SK-N-SH (cell line): ENCODE measurements at regions of chr16 and their contacts with region 1.

Region 1: GRCh38 chr16:89860747-89861304 is 12.6 kb upstream of the TCF25 start:
- DNase-seq: peak; percentile 95
- H3K4me3 ChIP-seq: peak overlapping the region in 1 of 2 experiments; percentile 25; a peak in 1 of 4 replicates
- H3K27ac ChIP-seq: no peak overlapping the region
- H3K4me1 ChIP-seq: no peaks in the 10 kb centered on the region
- H3K27me3 ChIP-seq: no peaks in the 10 kb centered on the region
- CTCF ChIP-seq: peak; percentile 95
- EP300 ChIP-seq: no peak
- RAD21 ChIP-seq: peak; percentile 88

Region 2: GRCh38 chr16:89700100-89700648 is 160.7 kb before region 1 on chr16:
- CTCF ChIA-PET with region 1: interaction called, 37 read pairs
- POLR2A ChIA-PET with region 1: no interaction called
- DNase-seq: peak; percentile 97
- H3K4me3 ChIP-seq: peak overlapping the region; percentile 78 to 79
- H3K27ac ChIP-seq: peak overlapping the region; percentile 71
- H3K4me1 ChIP-seq: peaks cover 9 to 29% of the 10 kb centered on the region in 2 experiments; a peak in 2 of 4 replicates
- H3K27me3 ChIP-seq: no peaks in the 10 kb centered on the region
- CTCF ChIP-seq: peak; percentile 69
- EP300 ChIP-seq: no peak
- RAD21 ChIP-seq: peak; percentile 73

Region 3: DNA sequence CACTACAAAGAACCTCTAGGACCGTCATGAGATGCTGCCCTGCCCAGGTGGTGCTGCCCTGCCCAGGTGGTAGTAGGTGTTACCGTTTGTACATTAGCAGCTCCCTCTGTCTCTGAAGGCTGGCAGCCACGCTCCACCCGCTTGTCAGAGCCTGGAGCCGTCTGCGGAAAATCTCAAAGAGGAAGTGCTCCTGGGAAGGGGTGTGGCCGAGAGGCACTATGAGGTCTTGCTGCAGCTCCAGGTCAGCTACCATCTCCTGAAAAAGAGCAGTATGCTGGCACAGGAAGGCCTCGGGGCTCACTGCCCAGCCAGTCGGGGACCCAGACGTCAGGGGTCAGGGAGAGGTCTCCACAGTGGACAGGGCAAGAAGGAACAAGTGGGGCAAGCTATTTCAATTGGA is 111.2 kb before region 1 on chr16:
- CTCF ChIA-PET with region 1: interaction called, 162 read pairs
- POLR2A ChIA-PET with region 1: no interaction called
- DNase-seq: no peak
- H3K4me3 ChIP-seq: no peak overlapping the region
- H3K27ac ChIP-seq: no peak overlapping the region
- H3K4me1 ChIP-seq: no peaks in the 10 kb centered on the region; a peak in 1 of 4 replicates
- H3K27me3 ChIP-seq: no peaks in the 10 kb centered on the region
- CTCF ChIP-seq: no peak
- EP300 ChIP-seq: no peak
- RAD21 ChIP-seq: no peak

Region 4: DNA sequence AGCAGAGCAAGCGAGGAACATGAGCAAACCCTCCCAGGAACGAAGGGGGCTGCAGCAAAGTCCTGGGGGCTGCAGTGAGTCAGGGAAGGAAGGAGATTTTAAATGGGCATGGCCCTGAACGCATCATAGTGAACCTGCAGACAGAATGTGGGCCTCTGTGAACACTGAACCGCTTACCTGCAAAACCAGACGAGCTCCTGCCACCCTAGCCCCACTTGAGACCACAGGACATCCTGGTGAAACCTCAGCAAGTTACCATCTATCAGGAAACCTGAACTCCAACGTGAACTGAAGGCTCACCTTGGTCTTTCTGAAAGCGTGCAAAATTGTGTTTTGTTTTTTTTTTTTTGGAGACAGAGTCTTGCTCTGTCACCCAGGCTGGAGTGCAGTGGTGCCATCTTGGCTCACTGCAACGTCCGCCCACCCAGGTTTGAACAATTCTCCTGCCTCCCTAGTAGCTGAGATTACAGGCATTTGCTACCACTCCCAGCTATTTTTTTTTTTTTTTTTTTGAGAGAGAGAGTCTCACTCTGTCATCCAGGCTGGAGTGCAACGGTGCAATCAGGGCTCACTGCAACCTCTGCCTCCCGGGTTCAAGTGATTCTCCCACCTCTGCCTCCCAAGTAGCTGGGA is 75.2 kb before region 1 on chr16:
- CTCF ChIA-PET with region 1: interaction called, 31 read pairs
- POLR2A ChIA-PET with region 1: no interaction called
- DNase-seq: no peak
- H3K4me3 ChIP-seq: no peak overlapping the region
- H3K27ac ChIP-seq: no peak overlapping the region; a peak in 1 of 4 replicates
- H3K4me1 ChIP-seq: peaks cover 0 to 9% of the 10 kb centered on the region in 2 experiments; a peak in 1 of 4 replicates
- H3K27me3 ChIP-seq: no peaks in the 10 kb centered on the region
- CTCF ChIP-seq: no peak
- EP300 ChIP-seq: no peak
- RAD21 ChIP-seq: no peak

Region 5: DNA sequence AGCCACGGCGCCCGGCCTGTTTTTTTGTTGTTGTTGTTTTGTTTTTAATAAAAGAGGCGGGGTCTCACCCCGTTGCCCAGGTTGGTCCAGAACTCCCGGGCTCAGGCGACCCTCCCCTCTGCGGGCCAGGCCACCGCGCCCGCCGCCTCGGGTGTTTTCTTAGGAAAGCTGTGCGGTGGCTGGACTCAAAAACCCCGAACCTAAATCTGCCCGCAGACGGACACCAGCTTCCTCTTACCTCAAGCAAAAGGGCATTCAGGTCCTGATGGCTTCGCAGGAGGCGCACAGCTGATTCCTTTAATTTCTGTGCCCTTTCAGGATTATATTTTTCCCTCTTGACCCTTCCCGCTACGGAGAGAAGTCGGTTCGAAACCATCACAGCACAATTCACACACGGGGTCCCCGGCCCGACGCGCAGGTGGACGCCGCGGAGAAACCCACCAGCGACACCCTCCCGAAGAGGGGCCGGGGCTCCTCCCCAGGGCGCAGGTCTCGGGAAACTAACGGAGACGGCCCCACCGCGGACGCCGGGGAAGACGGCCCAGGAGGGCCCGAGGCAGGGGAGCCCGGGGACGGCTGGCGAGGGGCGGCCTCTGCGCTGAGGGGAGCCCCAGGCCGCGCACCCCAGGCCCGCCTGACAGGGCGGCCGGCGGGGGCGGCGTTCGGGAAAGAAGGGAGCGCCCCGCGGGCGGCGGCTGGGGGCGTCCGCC is 45.0 kb before region 1 on chr16:
- CTCF ChIA-PET with region 1: interaction called, 36 read pairs
- POLR2A ChIA-PET with region 1: no interaction called
- DNase-seq: peak; percentile 74
- H3K4me3 ChIP-seq: peak overlapping the region; percentile 62 to 88
- H3K27ac ChIP-seq: no peak overlapping the region
- H3K4me1 ChIP-seq: peaks cover 0 to 2% of the 10 kb centered on the region in 2 experiments; a peak in 2 of 4 replicates
- H3K27me3 ChIP-seq: no peaks in the 10 kb centered on the region
- CTCF ChIP-seq: no peak
- EP300 ChIP-seq: no peak
- RAD21 ChIP-seq: no peak

Region 6: GRCh38 chr16:89837305-89837554 is 23.6 kb before region 1 on chr16:
- CTCF ChIA-PET with region 1: interaction called, 68 read pairs
- POLR2A ChIA-PET with region 1: no interaction called
- DNase-seq: no peak
- H3K4me3 ChIP-seq: no peak overlapping the region
- H3K27ac ChIP-seq: no peak overlapping the region
- H3K4me1 ChIP-seq: peaks cover under 1 to 7% of the 10 kb centered on the region in 2 experiments; a peak in 1 of 4 replicates
- H3K27me3 ChIP-seq: no peaks in the 10 kb centered on the region
- CTCF ChIP-seq: no peak
- EP300 ChIP-seq: no peak
- RAD21 ChIP-seq: no peak

Region 7: DNA sequence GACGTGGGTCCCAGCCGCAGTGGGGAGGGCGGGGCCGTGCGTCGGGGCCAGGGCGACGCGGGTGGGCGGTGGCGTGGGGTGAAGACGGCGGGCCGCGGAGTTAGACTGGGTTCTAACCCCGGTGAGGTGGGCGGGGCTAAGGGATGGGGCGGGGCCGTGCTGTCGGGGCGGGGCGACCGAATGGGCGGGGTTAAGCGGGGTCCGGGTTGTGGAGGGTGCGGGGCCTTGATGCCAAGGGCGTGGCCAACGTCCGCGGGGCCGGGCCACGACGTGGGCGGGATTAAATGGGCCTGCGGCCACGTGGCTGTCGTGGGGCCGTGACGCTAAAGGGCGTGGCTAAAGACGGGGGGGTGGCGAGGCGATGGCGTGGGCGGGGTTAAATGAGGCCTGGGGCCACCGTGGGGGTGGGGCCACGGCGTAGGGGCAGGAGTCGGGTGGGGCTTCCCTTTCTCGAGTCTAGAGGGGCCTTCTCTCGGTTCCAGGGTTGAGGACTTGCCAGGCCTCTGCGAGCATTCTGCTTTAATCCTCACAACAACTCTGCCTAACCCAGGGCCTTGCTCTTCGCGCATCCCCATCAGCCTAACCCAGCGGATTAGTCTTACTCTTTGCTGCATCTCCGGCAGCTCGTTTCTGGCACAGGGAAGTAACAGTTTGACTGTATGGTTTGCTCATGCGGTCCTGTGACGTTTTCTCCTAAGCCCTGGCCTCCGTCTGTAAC is 13.3 kb after region 1 on chr16:
- CTCF ChIA-PET with region 1: interaction called, 45 read pairs
- POLR2A ChIA-PET with region 1: interaction called, 3 read pairs
- DNase-seq: peak; percentile 98
- H3K4me3 ChIP-seq: peak overlapping the region; percentile 81 to 98
- H3K27ac ChIP-seq: peak overlapping the region; percentile 99 to 100
- H3K4me1 ChIP-seq: peaks cover 11 to 13% of the 10 kb centered on the region in 2 experiments
- H3K27me3 ChIP-seq: no peaks in the 10 kb centered on the region
- CTCF ChIP-seq: no peak
- EP300 ChIP-seq: no peak
- RAD21 ChIP-seq: no peak

Region 8: DNA sequence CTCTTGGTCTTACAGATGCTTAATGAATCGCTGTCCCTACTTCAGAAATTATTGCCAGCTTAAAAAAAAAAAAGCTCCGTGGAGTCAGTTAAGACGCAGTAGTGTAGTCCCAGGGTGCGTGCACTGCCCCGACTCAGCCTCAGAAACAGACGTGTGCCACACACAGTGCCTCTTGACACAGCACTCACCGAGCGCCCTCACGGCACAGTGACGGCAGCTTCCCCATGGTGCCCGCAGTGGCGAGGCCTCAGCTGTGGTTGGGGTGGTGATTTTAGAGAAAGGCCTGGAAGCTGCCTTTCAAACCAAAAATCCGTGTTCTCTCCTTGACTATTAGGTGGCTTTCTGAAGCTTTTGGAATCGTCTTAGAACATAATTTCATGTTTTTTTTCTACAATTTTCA is 26.4 kb after region 1 on chr16:
- CTCF ChIA-PET with region 1: no interaction called
- POLR2A ChIA-PET with region 1: no interaction called
- DNase-seq: no peak
- H3K4me3 ChIP-seq: no peak overlapping the region
- H3K27ac ChIP-seq: no peak overlapping the region
- H3K4me1 ChIP-seq: no peaks in the 10 kb centered on the region
- H3K27me3 ChIP-seq: no peaks in the 10 kb centered on the region
- CTCF ChIP-seq: no peak
- EP300 ChIP-seq: no peak
- RAD21 ChIP-seq: no peak

Region 9: GRCh38 chr16:89946515-89946914 is 85.7 kb after region 1 on chr16:
- CTCF ChIA-PET with region 1: no interaction called
- POLR2A ChIA-PET with region 1: no interaction called
- DNase-seq: no peak
- H3K4me3 ChIP-seq: no peak overlapping the region
- H3K27ac ChIP-seq: no peak overlapping the region
- H3K4me1 ChIP-seq: peaks cover 0 to 13% of the 10 kb centered on the region in 2 experiments; a peak in 1 of 4 replicates
- H3K27me3 ChIP-seq: no peaks in the 10 kb centered on the region
- CTCF ChIP-seq: no peak
- EP300 ChIP-seq: no peak
- RAD21 ChIP-seq: no peak